ENCODE measurements at regions of chr7 and their contacts with region 1.

Region 1: DNA sequence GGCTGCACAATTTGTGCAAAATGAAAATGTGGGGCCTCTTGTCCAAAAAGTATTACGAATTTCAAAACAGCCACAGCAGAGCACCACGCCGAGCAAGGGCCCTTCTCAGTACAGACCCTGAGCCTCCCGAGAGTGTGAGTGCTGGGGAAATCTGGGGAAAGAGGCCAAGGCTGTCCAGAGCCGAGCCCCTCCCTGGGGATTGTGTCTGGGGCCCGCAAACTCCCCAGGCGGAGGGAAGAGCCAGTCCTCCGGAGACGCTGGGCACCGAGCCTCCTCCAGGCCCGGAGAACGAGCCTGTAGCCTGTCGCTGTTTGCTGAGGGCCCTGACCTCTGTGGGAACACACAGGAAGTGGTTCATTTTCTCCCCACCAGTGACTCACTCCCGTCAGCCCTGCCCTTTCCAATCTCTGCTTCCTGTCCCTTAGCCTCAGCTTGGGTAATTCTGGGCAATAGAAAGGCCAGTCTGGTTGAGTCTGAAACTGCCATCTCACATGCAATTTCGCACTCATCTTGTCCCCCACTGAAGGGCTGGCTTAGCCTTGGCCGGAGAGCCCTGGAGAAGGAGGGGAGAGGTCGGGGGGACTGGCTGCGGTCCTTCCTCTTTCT is 19.5 kb upstream of the GNA12 start:
- DNase-seq: peak; percentile 91
- H3K4me3 Mint-ChIP-seq: peak overlapping the region; percentile 73
- H3K27ac Mint-ChIP-seq: peak overlapping the region; percentile 91
- H3K4me1 Mint-ChIP-seq: peaks cover 25% of the 10 kb centered on the region
- H3K27me3 Mint-ChIP-seq: no peaks in the 10 kb centered on the region

Region 2: DNA sequence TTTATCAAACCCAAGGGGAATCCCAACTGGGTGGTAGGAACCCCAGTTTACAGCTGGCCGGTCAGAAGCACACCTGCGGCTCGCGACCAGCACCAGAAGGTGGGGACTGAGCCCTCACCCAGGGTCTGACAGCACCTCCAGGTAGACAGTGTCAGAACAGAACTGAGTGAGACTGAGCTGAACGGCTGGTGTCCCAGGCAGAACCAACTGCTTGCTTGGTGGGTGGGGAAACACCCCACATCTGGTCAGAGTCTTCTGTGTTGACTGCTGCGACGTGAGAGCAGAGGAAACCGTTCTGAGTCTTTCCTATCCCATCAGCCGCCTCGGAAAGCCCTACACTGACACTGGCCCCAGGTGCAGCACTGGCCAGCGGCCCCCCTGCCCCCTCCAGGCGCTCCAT is 791.5 kb before region 1 on chr7:
- CTCF ChIA-PET with region 1: no interaction called
- POLR2A ChIA-PET with region 1: no interaction called
- intact Hi-C with region 1: no loop called
- DNase-seq: peak; percentile 12
- H3K4me3 Mint-ChIP-seq: no peak overlapping the region
- H3K27ac Mint-ChIP-seq: no peak overlapping the region
- H3K4me1 Mint-ChIP-seq: no peaks in the 10 kb centered on the region
- H3K27me3 Mint-ChIP-seq: no peaks in the 10 kb centered on the region

Region 3: DNA sequence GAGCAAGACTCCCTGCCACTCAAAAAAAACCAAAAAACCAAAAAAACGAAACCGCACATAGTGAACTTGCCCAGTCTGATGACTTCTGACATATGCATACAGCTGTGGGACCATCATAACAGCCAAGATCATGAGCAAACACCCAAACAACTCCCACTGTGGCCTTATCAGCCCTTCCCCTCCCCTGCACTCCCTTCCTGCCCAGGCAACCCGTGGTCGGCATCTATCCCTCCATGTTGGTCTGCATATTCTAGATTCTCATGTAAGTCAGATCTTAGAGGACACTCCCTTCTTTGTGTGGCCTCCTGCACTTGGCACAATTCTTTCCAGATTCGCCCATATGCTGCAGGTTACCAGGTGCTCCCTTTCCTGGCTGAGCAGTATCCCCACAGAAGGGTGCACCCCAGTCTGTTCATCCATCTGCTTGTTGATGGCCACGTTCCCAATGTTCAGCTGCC is 92.3 kb before region 1 on chr7:
- CTCF ChIA-PET with region 1: no interaction called
- POLR2A ChIA-PET with region 1: no interaction called
- intact Hi-C with region 1: loop called (anchors 5 kb)
- DNase-seq: no peak
- H3K4me3 Mint-ChIP-seq: no peak overlapping the region
- H3K27ac Mint-ChIP-seq: no peak overlapping the region
- H3K4me1 Mint-ChIP-seq: peaks cover 43% of the 10 kb centered on the region
- H3K27me3 Mint-ChIP-seq: no peaks in the 10 kb centered on the region

Region 4: DNA sequence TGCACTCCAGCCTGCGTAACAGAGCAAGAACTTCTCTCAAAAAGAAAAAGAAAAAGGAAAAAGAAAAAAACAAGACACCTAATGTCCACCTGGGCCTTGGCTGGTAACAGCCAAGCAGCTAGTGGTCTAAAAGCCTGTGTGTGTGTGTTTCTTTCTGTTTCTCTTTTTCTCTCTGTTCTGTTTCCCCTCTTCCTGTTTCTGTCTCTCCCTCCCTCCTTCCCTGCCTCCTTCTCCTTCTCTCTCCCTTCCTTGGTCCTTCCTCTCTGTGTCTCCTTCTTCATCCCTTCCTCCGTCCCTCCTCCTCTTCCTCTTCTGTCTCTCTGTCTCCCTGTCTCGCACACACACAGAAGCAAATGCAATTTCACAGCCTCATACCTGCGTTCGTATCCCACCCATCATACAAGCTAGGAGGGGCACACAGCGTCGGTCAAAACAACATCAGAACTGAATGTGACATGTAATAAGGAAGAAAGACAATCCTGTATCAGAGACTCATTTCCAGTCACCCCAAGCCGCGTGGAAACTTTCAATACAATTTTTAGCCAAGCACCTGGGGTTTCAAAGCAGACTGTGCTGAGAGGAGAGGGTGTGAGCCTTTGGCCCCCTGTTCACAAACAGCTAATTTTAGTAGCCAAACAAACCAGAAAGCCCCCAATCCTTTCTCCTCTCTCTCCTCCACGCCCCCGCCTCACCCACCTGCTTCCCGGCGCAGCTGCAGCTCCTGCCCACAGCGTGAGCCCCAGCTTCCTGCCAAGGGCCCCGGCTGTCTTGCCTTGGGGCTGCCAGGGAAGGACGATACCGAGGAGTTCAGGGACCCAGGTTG is 30.8 kb after region 1 on chr7:
- CTCF ChIA-PET with region 1: interaction called, 15 read pairs
- POLR2A ChIA-PET with region 1: no interaction called
- intact Hi-C with region 1: loop called (anchors 2 kb)
- DNase-seq: peak; percentile 84
- H3K4me3 Mint-ChIP-seq: peak overlapping the region; percentile 73
- H3K27ac Mint-ChIP-seq: peak overlapping the region; percentile 94
- H3K4me1 Mint-ChIP-seq: peaks cover 23% of the 10 kb centered on the region
- H3K27me3 Mint-ChIP-seq: no peaks in the 10 kb centered on the region

Region 5: GRCh38 chr7:3021825-3022224 is 158.3 kb after region 1 on chr7:
- CTCF ChIA-PET with region 1: no interaction called
- POLR2A ChIA-PET with region 1: no interaction called
- intact Hi-C with region 1: no loop called
- DNase-seq: no peak
- H3K4me3 Mint-ChIP-seq: no peak overlapping the region
- H3K27ac Mint-ChIP-seq: no peak overlapping the region
- H3K4me1 Mint-ChIP-seq: peaks cover 34% of the 10 kb centered on the region
- H3K27me3 Mint-ChIP-seq: no peaks in the 10 kb centered on the region

Region 6: DNA sequence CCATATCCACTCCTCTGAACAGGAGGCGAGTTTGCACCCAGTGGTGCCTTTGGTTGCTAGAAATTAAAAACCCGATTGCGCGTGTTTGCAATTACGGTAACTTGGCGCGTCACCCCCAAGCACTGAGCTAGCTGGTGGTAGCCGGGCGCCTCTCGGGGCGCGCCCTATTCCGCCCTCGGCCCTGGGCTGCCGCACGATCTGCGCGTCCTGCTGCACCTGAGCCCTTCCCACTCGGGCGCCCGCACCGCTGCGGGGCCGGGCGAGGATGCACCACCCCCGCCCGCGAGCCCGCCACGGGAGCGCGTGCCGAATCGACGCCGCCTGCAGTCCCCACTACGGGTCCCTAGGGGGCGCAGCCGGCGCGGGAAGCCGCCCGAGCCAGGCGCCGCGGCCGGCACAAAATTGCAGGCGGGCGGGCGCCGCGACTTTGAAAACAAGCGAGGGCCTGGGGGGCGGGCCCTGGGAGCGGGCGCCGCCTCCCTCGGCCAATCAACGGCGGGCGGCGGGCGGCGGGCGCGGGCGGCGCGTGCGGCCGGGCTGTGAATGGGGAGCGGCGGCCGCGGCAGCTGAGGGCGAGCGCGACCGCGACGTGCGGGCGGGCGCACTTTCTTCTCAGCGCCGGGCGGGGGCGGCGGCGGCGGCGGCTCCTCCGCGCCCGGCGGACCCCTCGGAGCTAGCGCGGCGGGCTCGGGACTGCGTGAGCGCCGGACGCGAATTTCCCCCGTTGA is 437.3 kb after region 1 on chr7 and contains the start of gene SDK1:
- CTCF ChIA-PET with region 1: interaction called, 4 read pairs
- POLR2A ChIA-PET with region 1: no interaction called
- intact Hi-C with region 1: loop called (anchors 2 kb)
- DNase-seq: peak; percentile 91
- H3K4me3 Mint-ChIP-seq: peak within 1 kb of the TSS; percentile 68
- H3K27ac Mint-ChIP-seq: no peak within 1 kb of the TSS
- H3K4me1 Mint-ChIP-seq: peaks cover 13% of the 10 kb centered on the region
- H3K27me3 Mint-ChIP-seq: peaks cover 32% of the 10 kb centered on the region
- total RNA-seq, gene SDK1: 0.14 to 0.24 TPM

Region 7: GRCh38 chr7:3897438-3898385 is 1034.1 kb after region 1 on chr7:
- CTCF ChIA-PET with region 1: interaction called, 7 read pairs
- POLR2A ChIA-PET with region 1: no interaction called
- intact Hi-C with region 1: loop called (anchors 5 kb)
- DNase-seq: peak; percentile 59
- H3K4me3 Mint-ChIP-seq: no peak overlapping the region
- H3K27ac Mint-ChIP-seq: no peak overlapping the region
- H3K4me1 Mint-ChIP-seq: no peaks in the 10 kb centered on the region
- H3K27me3 Mint-ChIP-seq: peaks cover 4% of the 10 kb centered on the region

Measured in activated CD4-positive, alpha-beta memory T cell treated with anti-CD3 and anti-CD28 coated beads for 36 hours (primary cell).